ENCODE measurements at regions of chr1 and their contacts with region 1.

Region 1: GRCh38 chr1:66335859-66336640 is 197.9 kb upstream of the SGIP1 start:
- DNase-seq: no peak
- ATAC-seq: 0 out of 2 replicates have a peak, but pooled peaks have one; percentile 34
- H3K4me3 ChIP-seq: no peak overlapping the region
- H3K27ac ChIP-seq: no peak overlapping the region
- H3K4me1 ChIP-seq: no peaks in the 10 kb centered on the region; the same call in 1 of the 2 replicates
- H3K27me3 ChIP-seq: peaks cover 16% of the 10 kb centered on the region
- CTCF ChIP-seq: no peak

Region 2: GRCh38 chr1:66685670-66686069 is 349.6 kb after region 1 on chr1:
- CTCF ChIA-PET with region 1: no interaction called
- POLR2A ChIA-PET with region 1: interaction called, 12 read pairs
- in situ Hi-C with region 1: no loop called
- intact Hi-C with region 1: no loop called
- DNase-seq: no peak
- ATAC-seq: no peak
- H3K4me3 ChIP-seq: no peak overlapping the region
- H3K27ac ChIP-seq: no peak overlapping the region
- H3K4me1 ChIP-seq: no peaks in the 10 kb centered on the region
- H3K27me3 ChIP-seq: no peaks in the 10 kb centered on the region
- CTCF ChIP-seq: no peak

Measured in Panc1 (cell line).